Activated B cell treated with CpG ODN at 0.5 μM for 24 hours (primary cell): ENCODE measurements at regions of chrX and their contacts with region 1.

Region 1: GRCh38 chrX:41561045-41561444 is 113.9 kb downstream of the NYX start:
- DNase-seq: no peak
- ATAC-seq: peak; percentile 57
- H3K4me3 Mint-ChIP-seq: no peak overlapping the region
- H3K27ac Mint-ChIP-seq: no peak overlapping the region
- H3K4me1 Mint-ChIP-seq: peaks cover 20% of the 10 kb centered on the region
- H3K27me3 Mint-ChIP-seq: no peaks in the 10 kb centered on the region
- CTCF ChIP-seq: no peak

Region 2: DNA sequence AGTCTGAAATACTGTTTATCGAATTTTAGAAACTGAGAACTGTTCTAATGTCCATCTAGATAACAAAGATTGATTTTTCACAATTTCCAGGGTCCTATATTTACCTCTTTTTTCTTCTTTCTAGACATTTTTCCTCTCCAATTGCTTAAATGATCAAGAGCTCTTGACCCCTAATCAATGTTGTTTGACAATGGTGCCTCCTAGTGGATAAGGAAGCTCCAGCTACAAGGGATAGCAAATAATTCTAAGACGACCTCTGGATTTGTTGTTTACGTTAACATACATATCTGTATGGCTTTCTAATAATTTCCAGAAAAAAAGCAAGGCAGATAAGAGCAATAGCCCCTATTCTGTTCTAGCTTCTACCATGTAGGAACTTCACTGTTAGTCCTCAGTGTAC is 198.8 kb after region 1 on chrX:
- CTCF ChIA-PET with region 1: interaction called, 32 read pairs
- POLR2A ChIA-PET with region 1: no interaction called
- intact Hi-C with region 1: loop called (anchors 1 kb)
- DNase-seq: no peak
- ATAC-seq: no peak
- H3K4me3 Mint-ChIP-seq: no peak overlapping the region
- H3K27ac Mint-ChIP-seq: no peak overlapping the region
- H3K4me1 Mint-ChIP-seq: peaks cover 1% of the 10 kb centered on the region
- H3K27me3 Mint-ChIP-seq: no peaks in the 10 kb centered on the region
- CTCF ChIP-seq: no peak